ENCODE measurements at regions of chr1 and their contacts with region 1.

Region 1: DNA sequence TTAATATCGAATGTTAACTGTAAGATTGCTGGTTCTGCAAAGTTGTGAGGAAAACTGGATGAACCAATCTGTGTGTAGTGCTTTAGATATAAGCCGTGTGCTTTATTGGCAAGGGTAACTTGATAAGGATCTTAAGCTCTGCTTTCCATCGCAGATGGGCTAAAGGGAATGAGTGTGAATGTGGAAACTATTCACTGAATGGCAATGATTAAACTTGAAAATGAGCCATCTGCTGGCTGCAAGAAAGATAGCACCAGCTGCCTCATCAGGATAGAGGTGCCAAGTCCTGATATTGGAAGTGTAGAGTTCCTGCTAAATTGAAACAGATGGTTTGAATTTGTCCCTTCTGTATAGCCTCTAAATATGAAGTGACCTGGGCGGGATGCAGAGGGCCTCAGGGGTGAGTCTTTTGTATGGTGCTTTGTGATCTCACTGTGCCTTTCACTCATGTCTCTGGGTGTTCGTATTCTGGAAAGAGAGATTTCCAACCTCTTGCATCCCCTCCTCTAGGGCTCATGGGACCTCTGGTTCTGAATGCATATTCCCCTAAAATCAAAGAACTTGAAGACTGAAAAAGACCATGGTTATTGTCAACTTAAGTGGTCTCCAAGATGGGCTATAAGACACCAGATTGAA is 9.2 kb downstream of the FCRL3 start:
- DNase-seq: peak; percentile 51
- ATAC-seq: peak; percentile 41
- H3K4me3 ChIP-seq: no peak overlapping the region
- H3K4me3 Mint-ChIP-seq: no peak overlapping the region
- H3K27ac ChIP-seq: peak overlapping the region in 1 of 2 donors; percentile 32
- H3K27ac Mint-ChIP-seq: peak overlapping the region; percentile 54
- H3K4me1 ChIP-seq: peaks cover 40 to 68% of the 10 kb centered on the region in 2 donors
- H3K4me1 Mint-ChIP-seq: peaks cover 77% of the 10 kb centered on the region
- H3K27me3 ChIP-seq: no peaks in the 10 kb centered on the region
- H3K27me3 Mint-ChIP-seq: no peaks in the 10 kb centered on the region
- CTCF ChIP-seq: peak; percentile 73

Region 2: DNA sequence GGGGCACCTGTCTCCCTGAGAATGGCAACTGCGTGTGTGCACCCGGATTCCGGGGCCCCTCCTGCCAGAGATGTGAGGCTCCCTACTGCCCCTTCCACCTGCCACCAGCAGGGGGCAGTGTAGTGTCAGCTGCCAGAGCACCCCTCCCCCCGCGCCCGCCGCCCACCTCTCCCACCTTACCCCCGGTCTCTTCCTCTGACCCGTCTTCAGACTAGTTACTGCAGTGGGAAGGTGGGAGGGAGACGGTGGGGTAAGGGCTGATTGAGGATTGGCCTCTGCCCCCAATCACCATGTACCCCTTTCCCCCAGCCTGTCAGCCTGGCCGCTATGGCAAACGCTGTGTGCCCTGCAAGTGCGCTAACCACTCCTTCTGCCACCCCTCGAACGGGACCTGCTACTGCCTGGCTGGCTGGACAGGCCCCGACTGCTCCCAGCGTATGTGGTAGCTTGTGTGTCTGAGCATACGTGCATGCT is 781.1 kb before region 1 on chr1:
- CTCF ChIA-PET with region 1: no interaction called
- POLR2A ChIA-PET with region 1: no interaction called
- intact Hi-C with region 1: no loop called
- DNase-seq: peak; percentile 58
- ATAC-seq: peak; percentile 41
- H3K4me3 ChIP-seq: no peak overlapping the region
- H3K4me3 Mint-ChIP-seq: no peak overlapping the region
- H3K27ac ChIP-seq: no peak overlapping the region
- H3K27ac Mint-ChIP-seq: no peak overlapping the region
- H3K4me1 ChIP-seq: no peaks in the 10 kb centered on the region
- H3K4me1 Mint-ChIP-seq: peaks cover 2% of the 10 kb centered on the region
- H3K27me3 ChIP-seq: peaks cover 0 to 21% (median 3%) of the 10 kb centered on the region in 4 experiments
- H3K27me3 Mint-ChIP-seq: peaks cover 39% of the 10 kb centered on the region
- CTCF ChIP-seq: peak; percentile 75

Region 3: GRCh38 chr1:157595356-157595755 is 96.0 kb before region 1 on chr1:
- CTCF ChIA-PET with region 1: interaction called, 17 read pairs
- POLR2A ChIA-PET with region 1: no interaction called
- intact Hi-C with region 1: no loop called
- DNase-seq: peak; percentile 67
- ATAC-seq: peak; percentile 80
- H3K4me3 ChIP-seq: no peak overlapping the region
- H3K4me3 Mint-ChIP-seq: peak overlapping the region; percentile 44
- H3K27ac ChIP-seq: no peak overlapping the region
- H3K27ac Mint-ChIP-seq: peak overlapping the region; percentile 12
- H3K4me1 ChIP-seq: peaks cover 38 to 41% of the 10 kb centered on the region in 2 donors
- H3K4me1 Mint-ChIP-seq: peaks cover 41% of the 10 kb centered on the region
- H3K27me3 ChIP-seq: peaks cover 0 to 22% (median 8%) of the 10 kb centered on the region in 4 experiments
- H3K27me3 Mint-ChIP-seq: peaks cover 4% of the 10 kb centered on the region
- CTCF ChIP-seq: no peak

Region 4: GRCh38 chr1:157652859-157653493 is 38.4 kb before region 1 on chr1:
- CTCF ChIA-PET with region 1: interaction called, 13 read pairs
- POLR2A ChIA-PET with region 1: no interaction called
- intact Hi-C with region 1: loop called (anchors 5 kb)
- DNase-seq: peak; percentile 79
- ATAC-seq: peak; percentile 96
- H3K4me3 ChIP-seq: peak overlapping the region in 3 of 5 experiments; percentile 12 to 45 (median 41)
- H3K4me3 Mint-ChIP-seq: peak overlapping the region; percentile 75
- H3K27ac ChIP-seq: peak overlapping the region; percentile 14
- H3K27ac Mint-ChIP-seq: peak overlapping the region; percentile 43
- H3K4me1 ChIP-seq: peaks cover 33 to 42% of the 10 kb centered on the region in 2 donors
- H3K4me1 Mint-ChIP-seq: peaks cover 39% of the 10 kb centered on the region
- H3K27me3 ChIP-seq: no peaks in the 10 kb centered on the region
- H3K27me3 Mint-ChIP-seq: no peaks in the 10 kb centered on the region
- CTCF ChIP-seq: no peak

Region 5: DNA sequence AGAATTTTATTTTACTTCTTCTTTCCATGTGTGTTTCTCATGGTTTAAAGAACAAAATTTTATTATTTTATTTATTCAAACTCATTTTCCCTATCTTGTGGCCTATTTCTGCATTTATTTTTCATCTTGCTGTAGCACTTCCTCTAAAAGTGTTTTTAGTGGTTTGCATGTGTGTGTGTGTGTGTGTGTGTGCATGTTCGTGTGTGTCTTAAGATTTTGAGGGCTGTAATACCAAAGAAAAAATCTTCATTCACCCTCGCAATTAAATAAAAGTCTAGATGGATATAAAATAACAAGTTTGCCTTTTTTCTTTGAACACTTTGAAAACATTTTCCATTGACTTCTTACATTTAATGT is 33.8 kb after region 1 on chr1:
- CTCF ChIA-PET with region 1: interaction called, 17 read pairs
- POLR2A ChIA-PET with region 1: interaction called, 3 read pairs
- intact Hi-C with region 1: loop called (anchors 5 kb)
- DNase-seq: peak; percentile 86
- ATAC-seq: peak; percentile 21
- H3K4me3 ChIP-seq: peak overlapping the region in 1 of 5 experiments; percentile 45
- H3K4me3 Mint-ChIP-seq: peak overlapping the region; percentile 71
- H3K27ac ChIP-seq: peak overlapping the region; percentile 80 to 94
- H3K27ac Mint-ChIP-seq: peak overlapping the region; percentile 98
- H3K4me1 ChIP-seq: peaks cover 65 to 69% of the 10 kb centered on the region in 2 donors
- H3K4me1 Mint-ChIP-seq: peaks cover 74% of the 10 kb centered on the region
- H3K27me3 ChIP-seq: no peaks in the 10 kb centered on the region
- H3K27me3 Mint-ChIP-seq: no peaks in the 10 kb centered on the region
- CTCF ChIP-seq: no peak

Region 6: GRCh38 chr1:157862114-157863070 is 171.0 kb after region 1 on chr1:
- CTCF ChIA-PET with region 1: interaction called, 14 read pairs
- POLR2A ChIA-PET with region 1: no interaction called
- intact Hi-C with region 1: no loop called
- DNase-seq: peak; percentile 34
- ATAC-seq: peak; percentile 24
- H3K4me3 ChIP-seq: no peak overlapping the region
- H3K4me3 Mint-ChIP-seq: no peak overlapping the region
- H3K27ac ChIP-seq: no peak overlapping the region
- H3K27ac Mint-ChIP-seq: peak overlapping the region; percentile 32
- H3K4me1 ChIP-seq: peaks cover 6 to 7% of the 10 kb centered on the region in 2 donors
- H3K4me1 Mint-ChIP-seq: peaks cover 19% of the 10 kb centered on the region
- H3K27me3 ChIP-seq: no peaks in the 10 kb centered on the region
- H3K27me3 Mint-ChIP-seq: no peaks in the 10 kb centered on the region
- CTCF ChIP-seq: no peak

Measured in B cell (primary cell).